OCI-LY7 (cell line): ENCODE measurements at regions of chr20 and their contacts with region 1.

Region 1: GRCh38 chr20:53847129-53847836 is 223.1 kb downstream of the BCAS1 start:
- DNase-seq: peak; percentile 82
- H3K4me3 ChIP-seq: peak overlapping the region; percentile 59
- H3K27ac ChIP-seq: peak overlapping the region; percentile 87
- H3K4me1 ChIP-seq: peaks cover 74% of the 10 kb centered on the region
- CTCF ChIP-seq: no peak

Region 2: GRCh38 chr20:52160621-52161204 is 1686.6 kb before region 1 on chr20:
- CTCF ChIA-PET with region 1: no interaction called
- POLR2A ChIA-PET with region 1: no interaction called
- intact Hi-C with region 1: no loop called
- DNase-seq: no peak
- H3K4me3 ChIP-seq: no peak overlapping the region
- H3K27ac ChIP-seq: no peak overlapping the region
- H3K4me1 ChIP-seq: no peaks in the 10 kb centered on the region
- CTCF ChIP-seq: no peak

Region 3: GRCh38 chr20:53425941-53426340 is 421.3 kb before region 1 on chr20:
- CTCF ChIA-PET with region 1: no interaction called
- POLR2A ChIA-PET with region 1: no interaction called
- intact Hi-C with region 1: no loop called
- DNase-seq: no peak
- H3K4me3 ChIP-seq: no peak overlapping the region
- H3K27ac ChIP-seq: no peak overlapping the region
- H3K4me1 ChIP-seq: no peaks in the 10 kb centered on the region
- CTCF ChIP-seq: no peak

Region 4: GRCh38 chr20:53857723-53858236 is 10.5 kb after region 1 on chr20:
- CTCF ChIA-PET with region 1: no interaction called
- POLR2A ChIA-PET with region 1: interaction called, 139 read pairs
- intact Hi-C with region 1: no loop called
- DNase-seq: no peak
- H3K4me3 ChIP-seq: no peak overlapping the region
- H3K27ac ChIP-seq: no peak overlapping the region
- H3K4me1 ChIP-seq: peaks cover 20% of the 10 kb centered on the region
- CTCF ChIP-seq: no peak

Region 5: GRCh38 chr20:53934421-53935343 is 87.4 kb after region 1 on chr20:
- CTCF ChIA-PET with region 1: interaction called, 4 read pairs
- POLR2A ChIA-PET with region 1: interaction called, 10 read pairs
- intact Hi-C with region 1: no loop called
- DNase-seq: peak; percentile 88
- H3K4me3 ChIP-seq: peak overlapping the region; percentile 51
- H3K27ac ChIP-seq: peak overlapping the region; percentile 94
- H3K4me1 ChIP-seq: peaks cover 81% of the 10 kb centered on the region
- CTCF ChIP-seq: no peak

Region 6: DNA sequence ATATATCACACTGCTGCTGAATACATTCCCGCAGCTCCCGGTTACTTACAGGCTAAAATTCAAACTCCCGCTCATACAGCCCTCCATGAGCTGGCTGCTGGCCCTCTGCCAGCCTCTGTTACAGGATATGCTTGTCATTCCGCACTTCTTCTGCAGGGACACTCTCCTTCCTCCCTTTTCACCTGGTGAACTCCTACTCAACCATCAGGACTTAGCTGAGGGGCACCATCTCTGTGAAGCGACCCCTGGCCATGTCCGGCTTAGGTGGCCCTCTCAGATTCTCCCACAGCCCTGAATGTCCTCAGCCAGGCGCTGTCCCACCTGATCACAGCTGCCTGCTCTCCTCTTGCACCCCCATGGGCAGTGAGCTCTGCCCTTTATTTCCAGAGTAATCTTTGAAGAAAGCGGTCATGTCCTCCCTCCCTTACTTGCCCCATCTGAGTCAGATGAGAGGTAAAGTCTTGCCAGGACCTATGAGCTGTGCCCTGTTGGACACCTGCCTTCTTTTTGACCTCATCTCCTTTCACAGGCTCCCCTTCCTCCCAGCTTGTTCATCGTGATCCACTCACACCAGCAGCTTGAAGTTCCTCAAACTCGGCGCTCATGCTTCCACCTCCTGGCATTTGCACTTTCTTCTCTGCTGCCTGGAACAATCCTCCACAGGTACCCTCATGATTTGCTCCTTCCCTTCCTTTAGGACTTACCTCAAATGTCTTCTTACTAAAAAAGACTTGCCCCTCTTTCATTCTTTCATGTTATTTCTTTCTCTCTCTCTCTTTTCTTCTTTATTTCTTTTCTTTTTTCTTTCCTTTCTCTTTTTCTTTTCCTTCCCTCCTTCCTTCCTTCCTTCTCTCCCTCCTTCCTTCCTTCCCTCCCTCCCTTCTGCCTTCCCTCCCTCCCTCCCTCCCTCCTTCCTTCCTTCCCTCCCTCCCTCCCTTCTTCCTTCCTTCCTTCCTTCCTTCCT is 320.9 kb after region 1 on chr20:
- CTCF ChIA-PET with region 1: no interaction called
- POLR2A ChIA-PET with region 1: no interaction called
- intact Hi-C with region 1: no loop called
- DNase-seq: no peak
- H3K4me3 ChIP-seq: no peak overlapping the region
- H3K27ac ChIP-seq: no peak overlapping the region
- H3K4me1 ChIP-seq: no peaks in the 10 kb centered on the region
- CTCF ChIP-seq: no peak